Common myeloid progenitor, CD34-positive (primary cell): ENCODE measurements at regions of chr4 and their contacts with region 1.

Region 1: DNA sequence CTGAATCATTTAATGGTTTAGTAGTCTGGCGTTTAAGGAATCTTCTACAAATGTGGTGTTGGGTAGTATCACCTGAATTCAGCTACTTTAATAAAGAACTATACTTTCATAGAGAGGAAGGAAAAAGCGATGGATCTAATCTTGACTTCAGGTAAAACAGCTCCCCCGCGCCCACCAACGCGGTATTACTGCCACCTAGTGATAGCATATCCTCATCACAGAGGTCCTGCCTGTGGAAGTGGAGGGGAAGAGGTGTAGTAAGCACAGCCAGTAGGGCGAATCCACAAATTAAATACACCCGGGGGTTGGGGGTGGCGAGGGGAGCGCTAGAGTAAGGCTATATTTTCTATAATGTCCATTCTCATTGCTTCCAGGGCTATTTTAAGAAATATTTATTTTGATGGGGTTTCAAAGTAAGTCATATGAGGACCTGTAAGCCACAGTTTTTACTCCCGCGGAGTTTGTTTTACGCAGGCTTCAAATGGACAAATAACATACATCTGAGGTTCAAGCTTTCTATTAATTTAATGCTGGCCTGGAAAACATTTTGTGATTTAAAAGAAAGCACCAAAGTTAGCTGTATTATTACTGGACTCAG is 8.3 kb upstream of the DAPP1 start:
- DNase-seq: peak; percentile 75 to 86 (median 84)
- H3K4me3 ChIP-seq: no peak overlapping the region
- H3K27ac ChIP-seq: no peak overlapping the region
- H3K4me1 ChIP-seq: peaks cover 0 to 2% (median 0%) of the 10 kb centered on the region in 4 experiments
- H3K27me3 ChIP-seq: peaks cover 0 to 4% (median 0%) of the 10 kb centered on the region in 5 experiments

Region 2: GRCh38 chr4:99723612-99724011 is 84.7 kb before region 1 on chr4:
- CTCF ChIA-PET with region 1: interaction called, 24 read pairs
- POLR2A ChIA-PET with region 1: no interaction called
- DNase-seq: peak; percentile 81 to 93 (median 92)
- H3K4me3 ChIP-seq: peak overlapping the region in 1 of 7 experiments; percentile 23
- H3K27ac ChIP-seq: peak overlapping the region; percentile 9 to 50
- H3K4me1 ChIP-seq: peaks cover 7 to 30% (median 20%) of the 10 kb centered on the region in 4 experiments
- H3K27me3 ChIP-seq: no peaks in the 10 kb centered on the region

Region 3: DNA sequence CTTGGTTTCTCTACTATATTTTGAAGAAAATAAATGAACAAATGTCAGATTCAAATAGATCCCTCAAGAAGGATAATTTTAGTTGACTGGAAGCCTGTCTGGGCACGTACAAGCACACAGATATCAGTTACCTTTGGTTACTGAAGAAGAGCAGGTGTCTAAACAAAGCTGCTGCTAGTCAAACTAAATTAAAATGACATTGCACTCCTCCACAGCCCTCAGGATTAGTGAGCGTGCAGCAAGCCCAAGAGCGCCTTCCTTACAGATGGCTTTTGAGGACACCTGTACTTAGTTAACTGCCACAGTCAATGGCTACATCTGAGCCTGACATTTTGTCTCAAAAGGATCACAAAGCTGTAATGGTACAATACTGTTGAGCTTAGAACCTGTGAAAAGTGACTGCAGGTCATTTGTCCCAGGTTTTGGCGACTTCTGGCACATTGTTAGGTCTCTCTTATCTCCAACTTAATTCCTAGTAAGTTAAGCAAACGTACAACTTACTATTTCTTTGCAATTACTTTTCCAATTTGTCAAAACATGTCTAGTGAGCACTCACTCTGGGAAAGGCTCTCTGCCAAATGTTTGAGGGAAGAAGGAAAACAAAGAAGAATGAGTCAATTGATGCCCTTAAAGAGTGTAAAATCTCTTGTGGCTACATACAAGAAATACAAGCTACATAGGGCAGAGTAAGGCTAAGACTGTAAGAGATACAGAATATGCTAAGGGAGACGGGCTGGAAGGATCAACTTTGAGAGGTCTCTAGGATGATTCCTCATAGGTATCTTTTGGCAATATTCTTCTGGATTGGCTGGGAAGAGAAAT is 17.4 kb before region 1 on chr4:
- CTCF ChIA-PET with region 1: no interaction called
- POLR2A ChIA-PET with region 1: no interaction called
- DNase-seq: no peak
- H3K4me3 ChIP-seq: no peak overlapping the region
- H3K27ac ChIP-seq: no peak overlapping the region
- H3K4me1 ChIP-seq: no peaks in the 10 kb centered on the region
- H3K27me3 ChIP-seq: peaks cover 0 to 3% (median 0%) of the 10 kb centered on the region in 5 experiments

Region 4: DNA sequence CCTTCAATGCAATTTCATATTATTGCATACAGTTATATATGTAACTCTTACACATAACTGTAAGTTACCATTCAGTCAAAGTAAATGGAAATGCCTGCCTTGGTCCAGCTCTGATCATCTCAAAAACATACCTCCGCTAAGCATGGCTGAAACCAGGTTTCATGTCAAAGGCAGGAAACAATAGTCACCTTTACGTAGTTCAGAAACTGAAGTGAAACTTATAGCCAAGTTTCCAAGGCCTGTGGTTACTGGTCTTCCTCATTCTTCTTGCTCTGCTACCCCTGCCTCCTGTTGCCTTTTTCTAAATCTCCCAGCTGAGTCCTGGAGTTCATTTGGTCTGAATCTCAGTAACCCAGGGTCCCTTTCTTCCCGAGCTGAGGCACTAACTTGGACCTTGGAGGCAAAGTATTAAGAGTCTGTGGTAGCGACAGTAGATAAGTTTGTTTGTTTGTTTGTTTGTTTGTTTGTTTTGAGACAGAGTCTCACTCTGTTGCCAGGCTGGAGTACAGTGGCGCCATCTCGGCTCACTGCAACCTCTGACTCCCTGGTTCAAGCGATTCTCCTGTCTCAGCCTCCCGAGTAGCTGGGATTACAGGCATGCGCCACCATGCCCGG is 39.1 kb after region 1 on chr4:
- CTCF ChIA-PET with region 1: interaction called, 10 read pairs
- POLR2A ChIA-PET with region 1: no interaction called
- DNase-seq: peak in 2 of 3 donors; percentile 64 to 75
- H3K4me3 ChIP-seq: peak overlapping the region in 2 of 7 experiments; percentile 34
- H3K27ac ChIP-seq: peak overlapping the region in 1 of 2 experiments; percentile 57
- H3K4me1 ChIP-seq: peaks cover 12 to 20% (median 18%) of the 10 kb centered on the region in 4 experiments
- H3K27me3 ChIP-seq: no peaks in the 10 kb centered on the region

Region 5: DNA sequence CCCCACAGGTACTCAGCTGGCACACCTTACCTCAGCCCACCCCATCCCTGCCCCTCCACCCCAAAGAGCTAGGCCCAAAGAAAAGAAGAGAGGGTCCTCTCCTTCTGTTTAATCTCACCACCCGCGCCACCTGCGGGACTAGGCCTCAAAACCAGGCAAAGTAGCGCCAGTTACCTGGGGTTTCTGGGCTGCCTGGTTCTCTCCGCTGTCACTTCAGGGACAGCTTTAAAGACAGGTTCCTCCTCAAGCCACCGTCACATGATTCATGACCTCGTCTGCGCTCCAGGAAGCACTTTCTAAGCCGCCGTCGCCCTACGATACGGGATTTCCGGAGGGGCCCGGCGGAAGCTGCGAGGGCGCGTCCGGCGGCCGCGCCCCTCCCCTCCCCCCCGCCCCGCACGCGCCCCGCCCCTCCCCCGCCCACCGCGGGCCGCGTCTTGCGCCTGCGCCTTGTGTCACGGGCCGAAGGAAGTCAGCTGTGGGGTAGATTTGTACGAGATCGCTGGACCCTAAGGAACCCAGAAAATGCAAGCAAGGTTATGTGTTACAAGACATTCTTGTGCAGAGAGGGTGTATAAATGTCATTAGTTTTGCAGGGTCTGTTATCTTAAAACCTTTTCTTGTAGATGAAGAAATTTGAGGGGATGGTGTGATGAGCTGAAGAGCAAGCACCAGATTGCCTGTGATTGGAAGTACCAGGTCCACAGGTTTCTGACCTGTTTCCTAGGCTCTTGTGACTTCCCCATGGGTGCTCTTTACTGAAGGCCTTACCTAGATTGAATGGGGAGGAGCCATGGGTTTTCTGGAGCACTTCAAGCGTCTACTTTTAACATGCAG is 86.0 kb after region 1 on chr4 and contains the start of gene LAMTOR3:
- CTCF ChIA-PET with region 1: interaction called, 12 read pairs
- POLR2A ChIA-PET with region 1: no interaction called
- DNase-seq: peak; percentile 95 to 98 (median 96)
- H3K4me3 ChIP-seq: peak within 1 kb of the TSS; percentile 74 to 97 (median 87)
- H3K27ac ChIP-seq: peak within 1 kb of the TSS; percentile 92 to 95
- H3K4me1 ChIP-seq: peaks cover 8 to 22% (median 16%) of the 10 kb centered on the region in 4 experiments
- H3K27me3 ChIP-seq: no peaks in the 10 kb centered on the region